ENCODE measurements at regions of chr20 and their contacts with region 1.

Region 1: DNA sequence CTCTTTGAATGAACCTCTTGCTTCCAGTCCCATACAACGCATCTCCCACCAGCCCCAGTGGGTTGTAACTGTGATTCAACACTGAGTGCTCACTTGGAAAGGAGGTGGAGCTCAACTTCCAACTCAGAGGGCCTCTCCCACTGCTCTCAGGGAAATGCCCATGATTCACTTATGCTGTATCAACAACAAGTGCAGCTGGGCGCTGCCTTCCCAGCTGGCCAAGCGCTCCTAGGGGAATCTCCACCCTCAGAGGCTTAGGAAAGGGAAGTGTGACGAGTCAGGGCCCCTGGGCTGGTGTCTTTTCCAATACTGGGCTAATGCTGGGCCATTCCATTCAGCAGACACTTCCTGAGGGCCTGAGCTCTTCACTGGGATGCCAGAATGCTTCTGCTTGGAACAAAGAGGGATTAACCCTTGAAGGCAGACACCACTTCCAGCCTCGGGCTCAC is 8.1 kb upstream of the OCSTAMP start:
- DNase-seq: no peak
- ATAC-seq: peak in 1 of 4 donors; percentile 40
- H3K4me3 ChIP-seq: no peak overlapping the region
- H3K27ac ChIP-seq: no peak overlapping the region
- H3K4me1 ChIP-seq: no peaks in the 10 kb centered on the region
- H3K27me3 ChIP-seq: no peaks in the 10 kb centered on the region
- CTCF ChIP-seq: no peak
- POLR2A ChIP-seq: no peak

Region 2: GRCh38 chr20:46607191-46607848 is 48.8 kb after region 1 on chr20:
- intact Hi-C with region 1: no loop called
- DNase-seq: no peak
- ATAC-seq: peak; percentile 47 to 77 (median 49)
- H3K4me3 ChIP-seq: no peak overlapping the region
- H3K27ac ChIP-seq: peak overlapping the region in 1 of 3 donors; percentile 57
- H3K4me1 ChIP-seq: peaks cover 0 to 21% (median 5%) of the 10 kb centered on the region in 4 donors
- H3K27me3 ChIP-seq: no peaks in the 10 kb centered on the region
- CTCF ChIP-seq: no peak
- POLR2A ChIP-seq: no peak

Region 3: DNA sequence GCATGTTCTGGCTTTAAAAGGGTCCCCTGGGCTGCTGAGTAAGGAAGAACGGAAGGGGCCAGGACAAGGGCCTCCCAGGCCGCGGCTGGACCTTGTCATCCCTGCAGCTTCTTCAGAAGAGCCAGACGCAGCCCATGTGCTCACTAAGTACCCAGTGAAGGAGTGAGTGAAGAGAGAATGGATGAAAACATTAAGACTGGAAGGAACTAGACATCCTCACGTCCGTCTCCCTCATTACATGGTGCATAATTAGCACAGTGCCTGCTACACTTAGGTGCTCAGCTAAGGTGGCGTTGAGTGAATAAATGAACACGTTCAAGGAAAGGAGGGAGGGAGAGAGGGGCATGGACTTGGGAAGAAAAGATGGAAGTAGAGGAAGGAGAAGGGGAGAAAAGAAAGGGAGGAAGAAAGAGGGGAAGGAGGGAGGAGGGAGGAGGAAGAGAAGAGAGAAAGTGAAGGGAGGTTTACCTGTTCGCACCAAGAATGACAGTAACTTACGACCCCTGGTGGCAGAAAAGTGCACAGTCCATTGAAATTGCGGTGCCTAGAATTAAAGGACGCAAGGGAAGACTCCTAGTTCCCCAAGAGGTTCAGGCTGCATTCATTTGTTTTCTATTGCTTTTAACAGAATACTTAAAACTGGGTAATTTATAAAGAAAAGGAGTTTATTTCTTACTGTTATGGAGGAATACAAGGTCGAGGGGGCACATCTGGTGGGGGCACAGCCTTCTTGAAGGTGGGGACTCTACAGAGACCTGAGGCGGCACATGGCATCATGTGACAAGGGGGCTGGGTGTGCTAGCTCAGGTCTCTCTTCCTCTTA is 122.7 kb after region 1 on chr20:
- intact Hi-C with region 1: loop called (anchors 5 to 10 kb)
- DNase-seq: peak in 2 of 3 donors; percentile 35 to 67
- ATAC-seq: peak; percentile 61 to 76 (median 73)
- H3K4me3 ChIP-seq: no peak overlapping the region
- H3K27ac ChIP-seq: no peak overlapping the region
- H3K4me1 ChIP-seq: peaks cover 0 to 28% (median 8%) of the 10 kb centered on the region in 4 donors
- H3K27me3 ChIP-seq: no peaks in the 10 kb centered on the region
- CTCF ChIP-seq: peak; percentile 78 to 88 (median 84)
- POLR2A ChIP-seq: no peak

Region 4: DNA sequence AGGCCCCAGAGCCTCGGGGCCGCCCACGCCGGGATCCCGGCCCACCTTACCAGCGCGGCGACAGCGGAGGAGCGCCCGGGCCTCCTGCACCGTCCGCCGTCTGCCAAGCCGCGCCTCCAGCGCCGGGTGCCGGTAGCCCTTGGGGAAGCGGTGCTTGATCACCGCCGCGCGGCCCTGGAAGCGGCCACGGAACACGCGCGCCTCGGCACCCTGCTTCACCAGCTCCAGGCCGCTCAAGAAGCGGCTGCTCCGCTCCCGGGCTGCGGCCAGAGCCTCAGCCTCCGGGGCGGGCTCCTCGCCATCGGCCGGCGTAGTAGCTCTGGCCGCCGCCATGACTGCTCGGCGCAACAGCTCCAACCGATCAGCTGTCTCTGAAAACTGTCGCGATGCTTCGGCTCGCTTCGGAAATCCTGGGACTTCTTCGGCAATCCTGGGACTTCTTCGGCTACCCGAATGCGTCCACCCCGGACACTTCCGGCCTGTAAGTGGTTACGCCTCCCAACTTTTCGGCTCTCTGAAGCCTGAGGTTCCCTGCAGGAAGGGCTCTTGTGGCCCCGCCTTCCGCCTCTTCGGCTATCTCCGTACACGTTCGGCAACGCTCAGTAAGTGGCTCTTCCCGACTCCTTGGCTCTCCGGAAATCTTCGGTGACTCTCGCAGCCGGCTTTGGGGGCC is 130.7 kb after region 1 on chr20 and contains the start of gene TP53RK:
- intact Hi-C with region 1: loop called (anchors 5 to 10 kb)
- DNase-seq: peak; percentile 97 to 98 (median 97)
- ATAC-seq: peak; percentile 96 to 98 (median 97)
- H3K4me3 ChIP-seq: peak within 1 kb of the TSS; percentile 75 to 93 (median 82)
- H3K27ac ChIP-seq: peak within 1 kb of the TSS; percentile 82
- H3K4me1 ChIP-seq: peaks cover 0 to 19% (median 5%) of the 10 kb centered on the region in 4 donors
- H3K27me3 ChIP-seq: no peaks in the 10 kb centered on the region
- CTCF ChIP-seq: peak in 1 of 4 donors; percentile 30
- POLR2A ChIP-seq: peak; percentile 72
- total RNA-seq, gene TP53RK: 3.1 to 10.0 (median 5.2) TPM